HepG2 (cell line): ENCODE measurements at regions of chr4 and their contacts with region 1.

Region 1: DNA sequence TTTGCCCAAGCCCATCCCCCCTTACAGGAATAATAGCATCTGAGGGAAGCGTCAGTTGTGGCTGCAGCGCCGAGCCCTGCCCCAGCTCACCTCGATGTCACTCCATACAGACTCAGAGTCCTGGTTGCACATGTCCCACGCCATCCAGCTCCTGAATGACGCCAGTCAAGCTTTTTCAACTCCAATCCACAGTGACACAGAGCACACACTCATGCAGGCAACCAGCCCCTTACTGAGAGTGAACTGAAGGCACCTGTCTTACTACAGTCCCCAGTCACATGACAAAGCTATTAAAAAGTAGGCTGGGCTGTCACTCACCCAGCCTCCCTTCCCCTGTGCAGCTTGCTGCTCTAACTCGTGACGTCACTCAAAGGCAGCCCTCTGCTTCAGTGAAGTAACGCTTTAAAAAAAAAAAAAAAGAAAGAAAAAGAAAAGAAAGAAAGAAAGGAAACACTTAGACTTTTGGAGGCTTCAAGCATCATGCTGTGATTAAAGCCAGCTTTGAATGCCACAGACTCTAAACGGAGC is at the start of gene PPARGC1A:
- DNase-seq: peak; percentile 80
- ATAC-seq: peak; percentile 86
- H3K4me3 ChIP-seq: peak within 1 kb of the TSS; percentile 79 to 82 (median 80)
- H3K27ac ChIP-seq: peak within 1 kb of the TSS; percentile 66
- H3K4me1 ChIP-seq: peaks cover 40% of the 10 kb centered on the region
- H3K27me3 ChIP-seq: peaks cover 2 to 4% of the 10 kb centered on the region in 2 experiments; a peak in 1 of 5 replicates
- CTCF ChIP-seq: 0 out of 2 replicates have a peak, but pooled peaks have one; percentile 12
- EP300 ChIP-seq: no peak
- POLR2A ChIP-seq: peak; percentile 89 to 95
- RAD21 ChIP-seq: no peak
- total RNA-seq, gene PPARGC1A: 18.8 and 20.7 TPM in 2 replicates

Region 2: DNA sequence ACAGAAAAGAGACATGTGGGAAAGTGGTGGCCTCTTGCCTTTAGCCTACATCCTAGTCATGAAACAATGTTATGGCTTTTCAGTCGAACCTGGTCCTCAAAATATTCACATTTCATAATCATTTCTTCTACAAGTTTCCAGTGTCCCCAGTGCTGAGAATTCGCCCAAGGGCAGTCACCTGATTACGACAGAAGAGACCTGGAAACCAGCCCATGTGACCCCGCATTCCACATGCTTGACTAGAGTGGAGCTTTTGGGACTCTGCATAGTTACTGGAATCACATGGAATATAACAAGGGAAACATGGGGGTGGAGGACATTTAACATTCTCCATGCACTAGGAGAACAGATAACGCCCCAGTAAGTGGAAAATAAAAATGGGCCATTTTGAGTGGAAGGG is 100.1 kb before region 1 on chr4:
- CTCF ChIA-PET with region 1: no interaction called
- POLR2A ChIA-PET with region 1: interaction called, 6 read pairs
- in situ Hi-C with region 1: no loop called
- intact Hi-C with region 1: loop called (anchors 10 kb)
- DNase-seq: peak; percentile 28
- ATAC-seq: no peak
- H3K4me3 ChIP-seq: no peak overlapping the region
- H3K27ac ChIP-seq: no peak overlapping the region
- H3K4me1 ChIP-seq: peaks cover 32% of the 10 kb centered on the region
- H3K27me3 ChIP-seq: no peaks in the 10 kb centered on the region
- CTCF ChIP-seq: no peak
- EP300 ChIP-seq: no peak
- POLR2A ChIP-seq: no peak
- RAD21 ChIP-seq: no peak

Region 3: GRCh38 chr4:23805450-23805851 is 84.4 kb before region 1 on chr4:
- CTCF ChIA-PET with region 1: no interaction called
- POLR2A ChIA-PET with region 1: no interaction called
- in situ Hi-C with region 1: no loop called
- intact Hi-C with region 1: no loop called
- DNase-seq: no peak
- ATAC-seq: no peak
- H3K4me3 ChIP-seq: no peak overlapping the region
- H3K27ac ChIP-seq: no peak overlapping the region
- H3K4me1 ChIP-seq: no peaks in the 10 kb centered on the region
- H3K27me3 ChIP-seq: no peaks in the 10 kb centered on the region
- CTCF ChIP-seq: no peak
- EP300 ChIP-seq: no peak
- POLR2A ChIP-seq: no peak
- RAD21 ChIP-seq: no peak

Region 4: DNA sequence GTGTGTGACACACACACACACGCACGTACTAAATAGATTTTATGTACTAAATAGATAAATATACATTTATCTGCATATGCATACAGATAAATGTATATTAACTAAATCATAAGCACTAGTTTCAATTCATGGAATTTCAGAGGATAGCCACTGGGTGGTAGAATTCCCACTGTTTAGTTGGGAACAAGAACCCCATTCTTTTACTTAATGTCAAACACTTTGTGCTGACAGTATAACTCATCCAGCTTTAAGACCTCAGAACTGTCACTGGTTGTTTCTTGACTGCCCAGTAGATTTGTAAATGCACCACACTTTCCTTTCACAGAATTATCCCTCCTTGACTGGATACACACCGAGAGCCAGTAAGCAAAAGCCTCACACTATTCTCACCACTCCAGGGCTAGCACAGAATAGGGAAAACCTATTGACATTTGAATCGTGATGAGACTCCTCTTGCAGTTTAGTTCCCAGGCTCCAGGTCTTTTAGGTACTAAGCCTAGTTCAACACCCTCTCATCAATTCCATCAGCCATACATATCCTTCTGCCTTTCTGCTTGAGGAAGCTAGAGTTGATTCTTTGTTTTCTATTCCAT is 32.4 kb before region 1 on chr4:
- CTCF ChIA-PET with region 1: no interaction called
- POLR2A ChIA-PET with region 1: interaction called, 18 read pairs
- in situ Hi-C with region 1: no loop called
- intact Hi-C with region 1: loop called (anchors 1 kb)
- DNase-seq: peak; percentile 49
- ATAC-seq: peak; percentile 45; the same call in 2 of the 3 replicates
- H3K4me3 ChIP-seq: no peak overlapping the region
- H3K27ac ChIP-seq: peak overlapping the region; percentile 59
- H3K4me1 ChIP-seq: peaks cover 88% of the 10 kb centered on the region
- H3K27me3 ChIP-seq: no peaks in the 10 kb centered on the region
- CTCF ChIP-seq: peak; percentile 48
- EP300 ChIP-seq: no peak
- POLR2A ChIP-seq: no peak
- RAD21 ChIP-seq: no peak

Region 5: DNA sequence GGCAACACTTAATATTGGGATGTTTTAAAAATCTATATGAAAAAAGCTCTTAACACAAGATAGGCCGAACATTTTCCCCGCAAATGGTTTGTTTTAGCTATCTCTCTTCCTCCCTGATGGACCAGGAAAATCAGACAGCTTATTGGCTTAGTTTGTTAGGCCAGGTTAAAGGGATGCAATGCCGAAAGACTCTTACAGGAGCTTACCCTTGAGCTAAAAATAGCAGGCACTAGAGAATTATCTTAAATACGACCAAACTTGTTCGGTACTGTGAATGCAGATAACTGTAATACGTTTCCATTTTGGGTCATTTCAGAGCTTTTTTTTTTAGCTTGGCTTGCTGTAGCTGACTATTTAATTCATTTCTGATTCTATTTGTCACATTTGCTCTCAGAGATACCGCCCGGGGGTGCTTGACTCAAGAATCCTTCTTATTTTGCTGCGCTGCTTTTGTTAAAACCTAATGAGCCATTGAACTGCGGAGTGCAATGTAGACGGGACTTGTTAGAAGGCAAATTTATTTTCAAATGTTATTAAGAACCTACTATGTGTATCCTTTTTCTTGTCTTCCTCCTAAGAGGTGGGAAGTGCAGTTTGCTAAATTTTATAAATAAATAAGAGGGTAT is 23.3 kb before region 1 on chr4:
- CTCF ChIA-PET with region 1: no interaction called
- POLR2A ChIA-PET with region 1: interaction called, 13 read pairs
- in situ Hi-C with region 1: no loop called
- intact Hi-C with region 1: loop called (anchors 1 kb)
- DNase-seq: no peak
- ATAC-seq: no peak
- H3K4me3 ChIP-seq: no peak overlapping the region
- H3K27ac ChIP-seq: no peak overlapping the region
- H3K4me1 ChIP-seq: peaks cover 97% of the 10 kb centered on the region
- H3K27me3 ChIP-seq: no peaks in the 10 kb centered on the region
- CTCF ChIP-seq: no peak
- EP300 ChIP-seq: no peak
- POLR2A ChIP-seq: no peak
- RAD21 ChIP-seq: no peak

Region 6: GRCh38 chr4:23877758-23878229 is 12.1 kb before region 1 on chr4:
- CTCF ChIA-PET with region 1: no interaction called
- POLR2A ChIA-PET with region 1: interaction called, 22 read pairs
- in situ Hi-C with region 1: no loop called
- intact Hi-C with region 1: loop called (anchors 1 kb)
- DNase-seq: peak; percentile 97
- ATAC-seq: peak; percentile 96
- H3K4me3 ChIP-seq: peak overlapping the region; percentile 5 to 56 (median 27); a peak in 1 of 6 replicates
- H3K27ac ChIP-seq: peak overlapping the region; percentile 84
- H3K4me1 ChIP-seq: peaks cover 97% of the 10 kb centered on the region
- H3K27me3 ChIP-seq: no peaks in the 10 kb centered on the region
- CTCF ChIP-seq: no peak
- EP300 ChIP-seq: peak; percentile 71 to 96; a peak in 3 of 4 replicates
- POLR2A ChIP-seq: no peak
- RAD21 ChIP-seq: no peak

Region 7: DNA sequence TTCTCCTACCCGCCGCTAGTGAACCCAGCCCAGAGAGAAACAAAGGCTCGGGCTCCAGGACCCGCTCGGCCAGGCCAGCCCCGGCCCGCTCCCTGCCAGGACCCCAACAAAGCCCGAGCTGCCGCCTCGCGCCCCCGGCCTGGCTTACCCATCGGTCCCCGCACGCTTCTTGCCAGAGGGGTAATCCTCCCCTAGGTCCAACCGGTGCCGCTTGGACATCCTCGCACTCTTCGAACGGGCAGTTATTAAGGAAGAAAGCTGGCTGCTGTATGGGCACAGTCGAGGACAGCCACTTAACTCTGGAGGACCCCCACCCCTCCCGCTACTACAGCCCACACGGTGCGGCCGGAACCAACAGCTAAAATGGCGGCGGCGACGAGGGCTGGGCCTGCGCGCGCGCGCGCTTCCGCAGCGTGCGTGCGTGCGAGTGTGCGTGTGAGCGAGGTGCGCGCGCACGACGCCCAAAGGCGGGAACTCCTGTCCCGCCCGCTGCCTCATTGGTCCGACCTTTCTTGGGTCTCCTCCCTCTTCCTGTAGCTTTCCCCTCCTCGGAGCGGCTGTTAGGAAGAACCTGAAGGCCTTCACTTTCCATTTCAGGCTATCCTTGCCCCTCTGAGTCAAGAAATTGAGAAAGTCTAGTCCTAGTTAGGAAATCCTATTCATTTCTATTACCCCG is 694.4 kb after region 1 on chr4 and contains the start of gene DHX15:
- CTCF ChIA-PET with region 1: no interaction called
- POLR2A ChIA-PET with region 1: interaction called, 6 read pairs
- in situ Hi-C with region 1: loop called (anchors 25 kb)
- intact Hi-C with region 1: no loop called
- DNase-seq: peak; percentile 92
- ATAC-seq: peak; percentile 94
- H3K4me3 ChIP-seq: peak within 1 kb of the TSS; percentile 96 to 99 (median 98)
- H3K27ac ChIP-seq: peak within 1 kb of the TSS; percentile 96
- H3K4me1 ChIP-seq: peaks cover 46% of the 10 kb centered on the region
- H3K27me3 ChIP-seq: no peaks in the 10 kb centered on the region; a peak in 1 of 5 replicates
- CTCF ChIP-seq: no peak
- EP300 ChIP-seq: no peak
- POLR2A ChIP-seq: peak; percentile 83 to 85
- RAD21 ChIP-seq: 0 out of 2 replicates have a peak, but pooled peaks have one; percentile 7
- total RNA-seq, gene DHX15: 165 and 198 TPM in 2 replicates